ENCODE measurements at regions of chr6 and their contacts with region 1.

Region 1: DNA sequence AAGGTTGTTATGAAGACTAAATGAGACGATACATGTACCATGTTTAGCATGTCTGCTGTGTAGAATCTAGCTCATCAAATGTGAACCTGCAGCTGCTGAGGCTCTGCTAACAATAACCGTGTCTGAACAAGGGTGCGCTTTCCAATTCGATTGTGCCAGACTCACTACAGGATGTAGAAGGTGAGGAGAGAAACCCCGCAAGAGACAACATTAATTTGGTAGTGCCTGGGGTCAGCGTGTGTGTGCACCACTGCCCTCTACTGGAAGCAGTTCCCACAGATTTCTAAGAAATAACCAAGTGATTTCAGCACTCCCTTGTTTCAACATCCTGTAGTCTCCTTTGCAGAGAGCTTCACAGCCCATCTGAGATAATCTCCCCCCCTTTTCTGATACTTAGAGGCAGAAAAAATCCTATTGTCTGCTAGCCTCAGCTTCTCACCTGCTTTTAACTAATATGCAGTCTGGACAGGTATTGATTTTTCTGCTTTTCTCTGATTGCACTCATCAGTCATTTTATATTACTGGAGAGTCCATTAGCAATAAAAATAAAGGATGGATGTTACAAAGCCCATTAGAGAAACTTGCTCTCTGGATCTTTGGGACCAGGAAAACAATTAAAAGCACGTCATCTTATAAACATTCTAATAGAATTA is 96.7 kb upstream of the BACH2 start:
- DNase-seq: peak; percentile 90
- ATAC-seq: peak; percentile 55
- H3K4me3 Mint-ChIP-seq: no peak overlapping the region
- H3K27ac Mint-ChIP-seq: peak overlapping the region; percentile 40
- H3K4me1 Mint-ChIP-seq: peaks cover 63% of the 10 kb centered on the region
- H3K27me3 Mint-ChIP-seq: no peaks in the 10 kb centered on the region
- CTCF ChIP-seq: peak; percentile 77

Region 2: DNA sequence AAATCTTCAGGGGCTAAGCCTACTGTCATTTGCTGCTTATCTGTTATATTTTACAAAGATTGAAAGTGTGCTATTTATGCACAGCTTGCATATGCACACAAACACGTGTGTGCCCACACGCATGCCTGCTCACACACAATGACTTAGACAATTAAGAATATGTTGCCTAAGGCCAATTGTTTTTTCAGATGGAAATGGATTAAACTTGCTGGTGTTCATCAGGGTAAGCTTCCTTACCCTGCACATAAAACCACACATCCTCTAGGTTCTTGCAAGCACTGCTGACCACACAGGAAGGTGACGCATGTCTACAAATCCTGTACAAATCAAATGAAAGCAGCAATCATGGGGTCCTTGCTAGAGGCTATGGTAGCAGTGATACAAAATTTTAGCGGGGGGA is 440.7 kb before region 1 on chr6:
- CTCF ChIA-PET with region 1: no interaction called
- POLR2A ChIA-PET with region 1: no interaction called
- intact Hi-C with region 1: loop called (anchors 10 kb)
- DNase-seq: peak; percentile 85
- ATAC-seq: peak; percentile 84
- H3K4me3 Mint-ChIP-seq: peak overlapping the region; percentile 35
- H3K27ac Mint-ChIP-seq: peak overlapping the region; percentile 89
- H3K4me1 Mint-ChIP-seq: peaks cover 72% of the 10 kb centered on the region
- H3K27me3 Mint-ChIP-seq: no peaks in the 10 kb centered on the region
- CTCF ChIP-seq: no peak

Region 3: DNA sequence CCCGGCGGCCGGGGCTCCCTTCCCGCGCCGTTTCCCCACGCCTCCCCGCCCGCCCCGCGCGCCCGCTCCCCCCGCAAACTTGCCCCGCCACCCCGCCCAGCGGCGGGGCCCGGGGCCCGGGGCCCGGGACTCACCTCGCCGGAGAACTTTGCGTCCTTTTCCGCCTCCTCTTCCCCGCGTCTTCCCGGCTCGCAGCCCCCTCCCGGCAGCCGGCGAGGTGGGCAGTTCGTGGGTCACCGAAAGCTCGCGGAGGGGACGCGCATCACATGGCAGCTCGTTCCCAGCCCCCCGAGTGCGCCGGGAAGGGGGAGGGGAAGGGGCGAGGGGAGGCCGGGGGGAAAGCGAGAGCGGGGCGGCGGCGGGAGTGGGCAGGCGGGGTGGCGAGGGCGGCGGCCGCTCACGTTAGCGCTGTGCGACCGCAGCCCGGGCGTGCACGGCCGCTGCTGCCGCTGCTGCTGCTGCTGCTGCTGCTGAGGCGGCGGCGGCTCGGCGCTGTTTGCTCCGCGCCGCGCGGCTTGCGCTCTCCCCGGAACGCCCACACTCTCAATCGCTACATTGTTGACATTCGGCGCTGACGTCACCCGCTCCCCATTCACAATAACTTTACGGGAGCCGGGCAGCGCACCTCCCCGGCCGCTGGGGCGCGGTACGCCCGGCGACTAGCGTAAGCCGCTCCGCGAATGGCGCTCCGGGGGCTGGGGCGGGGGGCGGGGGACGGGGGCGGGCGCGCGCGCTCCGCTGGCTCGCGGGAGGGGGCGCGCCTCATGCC is 96.8 kb before region 1 on chr6 and contains the start of gene BACH2:
- CTCF ChIA-PET with region 1: interaction called, 43 read pairs
- POLR2A ChIA-PET with region 1: interaction called, 61 read pairs
- intact Hi-C with region 1: loop called (anchors 2 kb)
- DNase-seq: peak; percentile 99
- ATAC-seq: peak; percentile 69
- H3K4me3 Mint-ChIP-seq: peak within 1 kb of the TSS; percentile 83
- H3K27ac Mint-ChIP-seq: peak within 1 kb of the TSS; percentile 94
- H3K4me1 Mint-ChIP-seq: peaks cover 38% of the 10 kb centered on the region
- H3K27me3 Mint-ChIP-seq: peaks cover 3% of the 10 kb centered on the region
- CTCF ChIP-seq: no peak
- total RNA-seq, gene BACH2: 60.7 to 66.9 TPM

Region 4: GRCh38 chr6:90375681-90376439 is 17.5 kb before region 1 on chr6:
- CTCF ChIA-PET with region 1: interaction called, 18 read pairs
- POLR2A ChIA-PET with region 1: no interaction called
- intact Hi-C with region 1: no loop called
- DNase-seq: no peak
- ATAC-seq: no peak
- H3K4me3 Mint-ChIP-seq: no peak overlapping the region
- H3K27ac Mint-ChIP-seq: no peak overlapping the region
- H3K4me1 Mint-ChIP-seq: peaks cover 1% of the 10 kb centered on the region
- H3K27me3 Mint-ChIP-seq: peaks cover 2% of the 10 kb centered on the region
- CTCF ChIP-seq: no peak

Region 5: DNA sequence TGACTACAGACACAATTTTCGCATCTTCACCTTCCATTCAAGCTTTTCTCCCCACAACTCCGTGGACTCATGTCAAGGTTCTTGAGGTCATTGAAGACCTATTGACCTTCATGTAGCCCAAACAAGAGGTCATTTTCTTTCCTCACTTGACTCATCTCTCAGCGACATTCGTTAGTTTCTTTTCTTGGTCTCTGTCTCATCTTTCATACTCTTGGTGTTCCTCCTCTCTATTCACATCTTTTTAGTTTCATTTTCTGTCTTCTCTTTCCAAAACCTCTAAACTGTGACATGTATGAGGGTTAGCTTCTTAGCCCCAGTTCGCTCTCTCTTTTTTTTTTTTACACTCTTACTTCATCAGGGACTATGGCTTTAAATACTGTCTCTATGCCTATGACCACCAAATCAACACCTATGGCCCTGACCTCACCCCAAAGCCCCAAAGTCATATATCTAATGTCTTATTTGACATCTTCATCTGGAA is 31.8 kb after region 1 on chr6:
- CTCF ChIA-PET with region 1: interaction called, 9 read pairs
- POLR2A ChIA-PET with region 1: interaction called, 15 read pairs
- intact Hi-C with region 1: no loop called
- DNase-seq: peak; percentile 64
- ATAC-seq: peak; percentile 96
- H3K4me3 Mint-ChIP-seq: peak overlapping the region; percentile 52
- H3K27ac Mint-ChIP-seq: peak overlapping the region; percentile 91
- H3K4me1 Mint-ChIP-seq: peaks cover 25% of the 10 kb centered on the region
- H3K27me3 Mint-ChIP-seq: no peaks in the 10 kb centered on the region
- CTCF ChIP-seq: no peak

Region 6: DNA sequence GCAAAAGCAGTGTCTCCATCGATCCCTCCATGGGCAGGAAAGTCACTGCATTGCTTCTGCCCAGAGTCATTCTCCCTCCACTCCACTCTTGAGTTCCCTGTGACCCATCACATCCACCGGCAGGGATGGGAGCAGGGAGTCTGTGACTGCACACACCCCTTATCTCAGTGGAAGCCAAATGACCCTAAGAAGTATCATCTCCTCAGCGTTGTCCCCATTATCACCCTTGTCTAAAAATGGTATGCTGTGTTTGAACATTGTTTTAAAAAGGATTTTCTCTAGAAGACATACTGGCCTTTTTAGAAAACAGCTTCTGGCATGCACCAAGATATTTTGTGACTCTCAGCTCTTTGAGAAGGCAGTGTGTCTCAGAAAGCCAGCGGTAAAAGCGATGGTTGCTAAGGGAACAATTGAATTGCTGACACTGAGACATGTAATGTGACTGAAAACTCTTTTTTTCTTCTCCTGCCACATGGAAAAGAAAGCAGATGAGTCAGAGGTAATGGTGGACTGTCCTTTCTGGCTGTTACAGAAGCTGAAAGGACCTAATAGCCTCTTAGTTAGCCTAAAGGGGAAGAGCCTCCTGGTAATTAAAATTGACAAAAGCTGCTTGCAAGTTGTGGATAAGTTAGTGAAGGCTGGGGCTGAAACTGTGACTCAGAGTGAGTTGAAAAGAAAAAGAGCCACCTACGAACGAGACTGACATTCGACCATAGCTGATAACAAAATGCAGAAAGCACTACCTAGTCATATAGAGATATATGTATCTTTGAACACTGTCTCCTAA is 73.0 kb after region 1 on chr6:
- CTCF ChIA-PET with region 1: interaction called, 14 read pairs
- POLR2A ChIA-PET with region 1: interaction called, 15 read pairs
- intact Hi-C with region 1: loop called (anchors 2 kb)
- DNase-seq: peak; percentile 73
- ATAC-seq: peak; percentile 80
- H3K4me3 Mint-ChIP-seq: peak overlapping the region; percentile 23
- H3K27ac Mint-ChIP-seq: peak overlapping the region; percentile 92
- H3K4me1 Mint-ChIP-seq: peaks cover 82% of the 10 kb centered on the region
- H3K27me3 Mint-ChIP-seq: no peaks in the 10 kb centered on the region
- CTCF ChIP-seq: no peak

Measured in activated CD8-positive, alpha-beta T cell treated with anti-CD3 and anti-CD28 coated beads for 36 hours (primary cell).